Activated B cell treated with CpG ODN at 0.5 μM for 24 hours (primary cell): ENCODE measurements at regions of chr10 and their contacts with region 1.

Region 1: DNA sequence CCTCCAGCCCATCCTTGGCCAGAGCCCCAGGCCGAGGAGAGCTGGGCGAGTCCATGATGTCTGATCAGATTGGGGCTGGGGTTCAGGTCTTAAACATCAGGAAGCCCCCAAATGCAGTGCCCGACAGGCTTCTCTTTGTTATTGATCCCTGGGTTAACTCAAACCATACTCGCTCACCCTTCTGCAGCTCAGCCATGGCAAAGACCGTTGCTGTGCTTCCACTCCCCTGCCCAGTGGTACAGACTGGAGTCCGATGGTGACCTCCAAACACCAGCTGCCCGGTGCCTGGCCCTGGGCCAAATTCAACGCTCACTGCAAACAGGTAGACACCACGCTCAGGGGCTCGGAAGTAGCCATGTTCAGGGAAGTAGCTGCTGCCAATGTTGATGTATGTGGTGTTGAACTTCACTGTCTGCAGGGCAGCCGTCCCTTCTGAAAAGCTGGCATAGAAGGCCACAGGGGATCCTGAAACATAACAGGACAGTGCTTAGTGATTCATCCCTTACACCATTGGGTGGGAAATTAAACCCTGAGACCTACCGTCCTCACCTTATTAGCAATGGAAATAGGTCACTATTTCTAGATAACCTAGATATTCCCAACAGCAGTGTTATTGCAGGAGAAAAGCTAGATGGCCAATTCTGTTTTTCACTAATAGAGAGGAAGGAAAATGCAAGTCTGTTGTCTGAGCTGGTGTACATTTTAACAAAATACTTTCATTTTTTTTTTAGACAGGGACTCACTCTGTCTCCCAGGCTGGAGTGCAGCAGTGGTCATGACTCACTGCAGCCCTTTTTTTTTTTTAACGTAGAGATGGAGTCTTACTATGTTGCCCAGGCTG is 20.5 kb downstream of the MMRN2 start:
- DNase-seq: no peak
- ATAC-seq: no peak
- H3K4me3 Mint-ChIP-seq: no peak overlapping the region
- H3K27ac Mint-ChIP-seq: no peak overlapping the region
- H3K4me1 Mint-ChIP-seq: peaks cover 4% of the 10 kb centered on the region
- H3K27me3 Mint-ChIP-seq: no peaks in the 10 kb centered on the region
- CTCF ChIP-seq: no peak

Region 2: DNA sequence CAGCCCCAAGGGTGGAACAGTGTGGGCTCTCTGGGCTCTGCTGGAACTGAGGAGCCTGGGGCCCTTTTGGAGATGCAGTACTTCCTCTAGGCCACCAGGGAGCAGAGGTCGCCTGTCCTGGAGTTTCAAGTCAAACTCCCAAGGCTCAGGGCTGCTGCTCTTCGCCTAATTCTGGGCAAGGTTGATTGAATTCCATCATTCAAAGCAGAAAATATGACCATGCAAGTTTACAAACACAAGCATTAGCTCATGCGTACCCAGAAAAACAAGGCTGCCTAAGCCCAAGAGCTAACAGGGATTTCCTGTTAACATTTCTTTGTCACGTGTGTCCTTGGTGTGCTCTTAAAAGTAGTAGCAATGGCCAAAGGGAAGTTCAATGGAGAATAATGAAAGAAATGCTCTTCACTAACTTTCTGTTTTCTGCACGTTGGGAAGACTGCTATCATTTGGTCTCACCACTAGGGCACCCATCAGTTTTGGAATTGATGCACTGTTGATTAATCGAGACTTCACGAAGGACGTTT is 248.4 kb before region 1 on chr10:
- CTCF ChIA-PET with region 1: interaction called, 7 read pairs
- POLR2A ChIA-PET with region 1: no interaction called
- intact Hi-C with region 1: loop called (anchors 1 kb)
- DNase-seq: peak; percentile 32
- ATAC-seq: peak; percentile 93
- H3K4me3 Mint-ChIP-seq: peak overlapping the region; percentile 24
- H3K27ac Mint-ChIP-seq: no peak overlapping the region
- H3K4me1 Mint-ChIP-seq: peaks cover 2% of the 10 kb centered on the region
- H3K27me3 Mint-ChIP-seq: peaks cover 6% of the 10 kb centered on the region
- CTCF ChIP-seq: peak; percentile 59

Region 3: GRCh38 chr10:86899670-86900276 is 37.1 kb before region 1 on chr10:
- CTCF ChIA-PET with region 1: no interaction called
- POLR2A ChIA-PET with region 1: interaction called, 11 read pairs
- intact Hi-C with region 1: no loop called
- DNase-seq: no peak
- ATAC-seq: peak; percentile 45
- H3K4me3 Mint-ChIP-seq: no peak overlapping the region
- H3K27ac Mint-ChIP-seq: no peak overlapping the region
- H3K4me1 Mint-ChIP-seq: no peaks in the 10 kb centered on the region
- H3K27me3 Mint-ChIP-seq: no peaks in the 10 kb centered on the region
- CTCF ChIP-seq: peak; percentile 45

Region 4: GRCh38 chr10:86965986-86966654 is 29.2 kb after region 1 on chr10:
- CTCF ChIA-PET with region 1: interaction called, 3 read pairs
- POLR2A ChIA-PET with region 1: interaction called, 3 read pairs
- intact Hi-C with region 1: loop called (anchors 1 kb)
- DNase-seq: no peak
- ATAC-seq: no peak
- H3K4me3 Mint-ChIP-seq: peak overlapping the region; percentile 73
- H3K27ac Mint-ChIP-seq: peak overlapping the region; percentile 84
- H3K4me1 Mint-ChIP-seq: peaks cover 35% of the 10 kb centered on the region
- H3K27me3 Mint-ChIP-seq: peaks cover 6% of the 10 kb centered on the region
- CTCF ChIP-seq: no peak

Region 5: GRCh38 chr10:87054373-87055295 is 117.8 kb after region 1 on chr10:
- CTCF ChIA-PET with region 1: no interaction called
- POLR2A ChIA-PET with region 1: no interaction called
- intact Hi-C with region 1: loop called (anchors 5 kb)
- DNase-seq: no peak
- ATAC-seq: no peak
- H3K4me3 Mint-ChIP-seq: no peak overlapping the region
- H3K27ac Mint-ChIP-seq: no peak overlapping the region
- H3K4me1 Mint-ChIP-seq: no peaks in the 10 kb centered on the region
- H3K27me3 Mint-ChIP-seq: no peaks in the 10 kb centered on the region
- CTCF ChIP-seq: no peak

Region 6: DNA sequence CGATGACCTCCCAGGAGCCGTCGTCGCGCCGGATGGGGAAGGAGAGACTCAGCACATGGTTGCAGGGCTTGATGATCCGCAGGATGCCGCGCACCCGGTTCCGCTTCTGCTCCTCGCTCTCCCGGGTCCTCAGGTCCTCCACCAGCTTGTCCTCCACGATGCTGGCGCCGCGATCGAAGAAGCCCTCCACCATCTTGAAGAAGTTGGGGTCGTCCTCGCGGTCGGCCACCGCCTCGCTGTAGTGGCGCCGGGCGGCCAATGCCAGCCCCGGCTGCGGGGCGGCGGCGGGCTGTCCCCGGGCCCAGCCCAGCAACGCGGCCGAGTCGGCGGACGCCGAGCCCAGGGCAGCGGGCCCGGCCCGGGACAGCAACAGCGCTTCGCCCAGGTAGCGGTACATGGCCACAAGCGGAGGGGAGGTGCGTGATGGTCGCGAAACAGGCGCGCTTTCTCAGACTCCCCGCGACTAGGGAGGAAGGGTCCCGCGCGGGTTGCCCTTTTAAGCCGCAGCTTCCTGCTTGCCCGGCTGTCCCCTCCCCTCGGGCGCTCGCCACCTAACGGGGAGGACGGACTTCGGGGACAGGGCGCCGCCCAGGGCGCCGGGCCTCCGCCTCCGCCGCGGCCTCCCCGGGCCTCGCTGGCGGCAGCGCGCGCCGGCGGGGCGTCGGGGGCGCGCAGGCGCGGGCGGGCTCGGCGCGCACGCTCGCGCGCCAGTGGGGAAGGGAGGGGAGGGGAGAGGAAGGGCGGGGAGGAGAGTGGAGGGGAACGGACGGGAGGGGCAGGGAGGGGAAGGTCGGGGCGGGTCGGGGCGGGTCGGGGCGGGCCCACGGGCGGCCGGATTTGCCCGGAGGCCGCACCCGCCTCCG is 157.7 kb after region 1 on chr10 and contains the starts of genes GLUD1 and SHLD2:
- CTCF ChIA-PET with region 1: no interaction called
- POLR2A ChIA-PET with region 1: no interaction called
- intact Hi-C with region 1: loop called (anchors 1 kb)
- DNase-seq: peak; percentile 89
- ATAC-seq: peak; percentile 76
- H3K4me3 Mint-ChIP-seq: peak within 1 kb of the TSS; percentile 92
- H3K27ac Mint-ChIP-seq: peak within 1 kb of the TSS; percentile 91
- H3K4me1 Mint-ChIP-seq: peaks cover 42% of the 10 kb centered on the region
- H3K27me3 Mint-ChIP-seq: no peaks in the 10 kb centered on the region
- CTCF ChIP-seq: no peak
- total RNA-seq, gene GLUD1: 96.5 and 98.4 TPM in 2 replicates
- total RNA-seq, gene SHLD2: 29.3 and 29.6 TPM in 2 replicates